ENCODE measurements at regions of chr20 and their contacts with region 1.

Region 1: GRCh38 chr20:49610701-49611538 is 43.0 kb upstream of the PTGIS start:
- DNase-seq: peak; percentile 98
- H3K4me3 Mint-ChIP-seq: peak overlapping the region; percentile 67
- H3K27ac Mint-ChIP-seq: peak overlapping the region; percentile 67
- H3K4me1 Mint-ChIP-seq: peaks cover 58% of the 10 kb centered on the region
- H3K27me3 Mint-ChIP-seq: peaks cover 11% of the 10 kb centered on the region
- CTCF ChIP-seq: peak; percentile 100

Region 2: GRCh38 chr20:49583669-49584417 is 27.1 kb before region 1 on chr20:
- CTCF ChIA-PET with region 1: interaction called, 10 read pairs
- intact Hi-C with region 1: no loop called
- DNase-seq: peak; percentile 87
- H3K4me3 Mint-ChIP-seq: peak overlapping the region; percentile 49
- H3K27ac Mint-ChIP-seq: peak overlapping the region; percentile 92
- H3K4me1 Mint-ChIP-seq: peaks cover 62% of the 10 kb centered on the region
- H3K27me3 Mint-ChIP-seq: no peaks in the 10 kb centered on the region
- CTCF ChIP-seq: no peak

Region 3: DNA sequence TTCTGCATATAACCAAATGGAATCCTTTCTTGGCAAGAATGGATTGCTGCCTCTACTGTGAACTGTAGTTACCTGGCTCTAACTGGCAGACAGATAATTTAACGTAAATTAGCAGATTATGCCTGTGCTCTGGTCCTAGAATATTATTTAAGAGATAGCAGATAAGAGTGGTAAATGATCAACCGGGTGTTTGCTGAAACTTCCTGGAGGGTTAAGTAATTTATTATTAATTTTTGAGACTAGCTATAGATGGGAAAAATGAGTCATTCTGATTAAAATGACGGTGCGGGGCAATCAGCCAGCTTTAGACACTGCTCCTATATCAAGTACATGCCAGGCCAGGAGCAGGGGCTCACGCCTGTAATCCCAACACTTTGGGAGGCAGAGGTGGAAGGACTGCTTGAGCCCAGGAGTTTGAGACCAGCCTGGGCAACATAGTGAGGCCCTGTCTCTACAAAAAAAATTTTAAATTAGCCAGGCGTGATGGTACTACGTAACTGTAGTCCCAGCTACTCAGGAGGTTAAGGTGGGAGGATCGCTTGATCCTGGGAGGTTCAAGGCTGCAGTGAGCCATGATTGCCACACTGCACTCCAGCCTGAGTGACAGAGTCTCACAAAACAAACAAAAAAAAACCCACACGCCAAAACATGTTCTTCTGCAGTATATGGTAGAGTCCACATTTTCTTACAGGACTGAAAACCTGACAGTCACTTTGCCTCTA is 80.1 kb after region 1 on chr20:
- CTCF ChIA-PET with region 1: interaction called, 10 read pairs
- intact Hi-C with region 1: loop called (anchors 5 kb)
- DNase-seq: peak; percentile 83
- H3K4me3 Mint-ChIP-seq: peak overlapping the region; percentile 18
- H3K27ac Mint-ChIP-seq: peak overlapping the region; percentile 84
- H3K4me1 Mint-ChIP-seq: peaks cover 78% of the 10 kb centered on the region
- H3K27me3 Mint-ChIP-seq: no peaks in the 10 kb centered on the region
- CTCF ChIP-seq: no peak

Region 4: GRCh38 chr20:49812463-49813304 is 201.8 kb after region 1 on chr20 and contains the start of gene SLC9A8:
- CTCF ChIA-PET with region 1: interaction called, 6 read pairs
- intact Hi-C with region 1: loop called (anchors 2 kb)
- DNase-seq: peak; percentile 93
- H3K4me3 Mint-ChIP-seq: peak within 1 kb of the TSS; percentile 89
- H3K27ac Mint-ChIP-seq: peak within 1 kb of the TSS; percentile 44
- H3K4me1 Mint-ChIP-seq: peaks cover 54% of the 10 kb centered on the region
- H3K27me3 Mint-ChIP-seq: no peaks in the 10 kb centered on the region
- CTCF ChIP-seq: peak; percentile 69
- total RNA-seq, gene SLC9A8: 30.0 and 31.7 TPM in 2 replicates

Region 5: DNA sequence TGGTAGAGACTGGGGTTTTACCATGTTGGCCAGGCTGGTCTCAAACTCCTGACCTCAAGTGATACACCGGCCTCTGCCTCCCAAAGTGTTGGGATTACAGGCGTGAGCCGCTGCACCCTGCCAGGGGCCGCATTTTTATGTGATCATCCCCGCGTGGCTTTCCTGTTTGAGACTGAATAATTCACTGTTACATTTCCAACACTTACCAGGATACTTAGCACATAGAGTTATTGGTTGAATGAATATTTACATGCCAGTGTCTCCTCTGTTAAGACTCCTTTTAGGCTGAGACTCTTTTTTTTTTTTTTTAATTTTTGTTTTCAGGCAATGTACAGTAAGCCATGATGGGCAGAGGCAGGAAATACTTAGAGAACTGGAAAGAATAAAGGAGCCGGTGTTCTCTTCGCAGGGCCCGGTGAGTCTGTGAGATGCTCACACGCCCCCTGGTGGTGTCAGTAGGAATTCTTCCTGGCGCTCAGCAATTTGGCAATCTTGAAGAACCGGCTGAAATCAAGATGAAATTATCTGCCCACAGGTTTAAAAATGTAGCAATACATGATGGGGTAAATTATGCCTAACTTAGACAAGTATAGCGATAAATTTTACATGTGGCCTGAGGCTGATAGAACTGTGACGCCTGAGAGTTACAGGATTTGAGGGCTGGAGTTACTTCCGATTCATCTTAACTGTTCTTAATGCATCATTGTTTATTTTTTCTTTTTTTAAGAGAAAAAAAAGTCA is 317.7 kb after region 1 on chr20:
- CTCF ChIA-PET with region 1: interaction called, 14 read pairs
- intact Hi-C with region 1: loop called (anchors 2 kb)
- DNase-seq: peak; percentile 93
- H3K4me3 Mint-ChIP-seq: no peak overlapping the region
- H3K27ac Mint-ChIP-seq: peak overlapping the region; percentile 42
- H3K4me1 Mint-ChIP-seq: peaks cover 3% of the 10 kb centered on the region
- H3K27me3 Mint-ChIP-seq: no peaks in the 10 kb centered on the region
- CTCF ChIP-seq: peak; percentile 91

Region 6: DNA sequence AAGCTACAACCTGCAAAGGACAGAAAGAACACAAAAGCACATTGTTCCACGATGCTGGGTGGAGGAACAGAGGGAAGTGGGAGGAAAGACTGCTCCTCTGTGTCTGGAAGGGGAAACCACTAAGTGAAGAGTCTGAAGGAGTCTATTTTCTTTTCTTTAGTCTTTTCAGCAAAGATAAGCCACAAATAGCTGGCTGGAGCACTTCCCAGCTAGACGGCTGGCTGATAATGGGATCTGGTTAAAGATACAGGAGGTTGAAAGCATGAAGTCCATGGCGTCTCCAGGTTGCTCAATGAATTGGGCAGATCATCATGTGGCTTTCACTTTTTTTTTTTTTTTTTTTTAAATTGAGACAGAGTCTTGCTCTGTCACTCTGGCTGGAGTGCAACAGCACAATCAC is 1566.0 kb after region 1 on chr20:
- CTCF ChIA-PET with region 1: no interaction called
- intact Hi-C with region 1: no loop called
- DNase-seq: no peak
- H3K4me3 Mint-ChIP-seq: no peak overlapping the region
- H3K27ac Mint-ChIP-seq: no peak overlapping the region
- H3K4me1 Mint-ChIP-seq: no peaks in the 10 kb centered on the region
- H3K27me3 Mint-ChIP-seq: peaks cover 65% of the 10 kb centered on the region
- CTCF ChIP-seq: no peak

Measured in Calu3 (cell line).